CD8-positive, alpha-beta T cell (primary cell): ENCODE measurements at regions of chr14 and their contacts with region 1.

Region 1: DNA sequence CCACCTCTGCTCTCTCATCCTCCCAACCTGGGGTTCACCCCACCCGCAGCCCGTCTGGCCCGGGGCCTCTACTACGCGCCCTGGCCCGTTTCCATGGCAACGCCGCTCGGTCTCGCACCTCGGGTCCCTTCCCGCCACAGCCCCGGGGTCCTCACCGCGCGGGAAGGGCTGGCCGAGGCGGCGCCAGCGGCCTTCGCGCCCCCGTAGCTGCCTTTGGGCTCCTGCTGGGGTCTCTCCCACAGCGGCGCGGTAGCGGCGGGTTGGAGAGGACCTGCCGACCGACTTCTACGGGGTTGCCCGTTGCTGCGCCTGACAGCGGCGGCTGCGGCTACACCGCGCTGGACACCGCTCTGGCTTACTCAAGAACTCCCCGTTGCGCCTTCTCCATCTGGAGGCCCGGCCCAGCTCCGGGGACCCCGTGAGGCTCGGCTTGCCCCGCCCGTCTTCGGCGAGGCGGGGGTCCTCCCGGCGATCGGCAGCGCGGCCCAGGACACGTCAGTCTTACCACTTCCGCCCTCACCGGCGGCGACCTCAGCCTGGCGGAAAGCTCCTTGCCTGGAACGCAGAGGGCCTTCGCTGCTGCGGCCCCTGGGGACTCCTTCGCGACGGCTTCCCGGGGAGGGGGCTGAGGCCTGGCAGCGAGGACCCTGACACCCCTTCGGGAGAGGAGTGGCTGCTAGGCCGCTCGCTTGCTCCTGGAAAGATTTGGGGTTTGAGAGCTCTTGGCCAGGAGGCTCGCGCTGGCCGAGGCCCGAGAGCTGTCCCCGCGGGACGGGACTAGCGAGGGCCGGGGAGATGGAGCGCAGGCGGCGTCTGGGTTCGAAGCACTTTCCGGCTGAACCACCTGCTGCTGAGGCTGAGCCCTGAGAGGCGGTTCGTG is at the start of gene TM9SF1:
- DNase-seq: peak; percentile 81 to 96 (median 91)
- ATAC-seq: peak; percentile 83
- H3K4me3 ChIP-seq: peak within 1 kb of the TSS; percentile 87 to 94
- H3K4me3 Mint-ChIP-seq: peak within 1 kb of the TSS; percentile 94
- H3K27ac ChIP-seq: peak within 1 kb of the TSS; percentile 99 to 100
- H3K27ac Mint-ChIP-seq: peak within 1 kb of the TSS; percentile 98
- H3K4me1 ChIP-seq: peaks cover 31% of the 10 kb centered on the region
- H3K4me1 Mint-ChIP-seq: peaks cover 50% of the 10 kb centered on the region
- H3K27me3 ChIP-seq: no peaks in the 10 kb centered on the region
- H3K27me3 Mint-ChIP-seq: no peaks in the 10 kb centered on the region
- CTCF ChIP-seq: no peak
- total RNA-seq, gene TM9SF1: 17.5 to 20.4 TPM

Region 2: DNA sequence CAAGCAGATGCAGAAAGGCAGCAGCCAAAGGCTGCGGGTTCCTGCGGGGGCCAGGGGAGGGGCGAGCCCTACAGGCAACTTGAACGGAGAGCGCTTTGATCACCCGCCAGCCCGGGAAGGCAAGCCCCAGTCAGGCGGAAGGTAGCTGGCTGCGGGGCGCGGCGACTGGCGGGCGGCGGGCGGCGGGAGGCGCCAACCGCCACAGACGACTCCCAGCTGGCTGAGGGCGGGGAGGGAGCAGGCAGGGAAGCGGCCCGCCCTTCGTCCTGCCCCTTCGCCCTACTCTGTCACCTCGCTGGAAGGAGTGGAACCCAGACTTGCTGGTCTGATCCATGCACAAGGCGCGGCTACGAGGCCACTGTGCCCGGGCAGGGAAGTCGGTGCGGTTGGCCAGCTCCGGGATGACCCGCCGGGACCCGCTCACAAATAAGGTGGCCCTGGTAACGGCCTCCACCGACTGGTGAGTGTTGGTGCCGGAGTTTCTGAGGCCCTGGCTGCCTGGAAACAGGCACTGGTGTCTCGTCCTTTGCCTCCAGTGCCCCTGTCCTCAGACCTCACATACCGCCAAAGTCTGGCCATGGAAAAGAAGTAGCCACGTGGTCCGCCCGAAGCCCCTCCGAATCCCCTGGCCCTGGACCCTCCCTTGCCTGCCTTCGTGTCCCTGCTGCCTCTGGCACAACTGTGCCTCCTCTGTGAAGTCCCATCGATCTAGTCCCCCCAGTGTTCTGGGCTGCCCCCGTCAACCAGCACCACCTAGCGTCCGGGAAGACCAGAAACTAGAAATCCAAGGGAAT is 159.1 kb before region 1 on chr14:
- CTCF ChIA-PET with region 1: no interaction called
- POLR2A ChIA-PET with region 1: no interaction called
- intact Hi-C with region 1: no loop called
- DNase-seq: peak; percentile 29 to 79 (median 69)
- ATAC-seq: peak; percentile 79
- H3K4me3 ChIP-seq: peak overlapping the region; percentile 69 to 87
- H3K4me3 Mint-ChIP-seq: peak overlapping the region; percentile 89
- H3K27ac ChIP-seq: peak overlapping the region; percentile 40 to 66
- H3K27ac Mint-ChIP-seq: peak overlapping the region; percentile 83
- H3K4me1 ChIP-seq: no peaks in the 10 kb centered on the region
- H3K4me1 Mint-ChIP-seq: peaks cover 9% of the 10 kb centered on the region
- H3K27me3 ChIP-seq: no peaks in the 10 kb centered on the region
- H3K27me3 Mint-ChIP-seq: no peaks in the 10 kb centered on the region
- CTCF ChIP-seq: peak; percentile 64

Region 3: DNA sequence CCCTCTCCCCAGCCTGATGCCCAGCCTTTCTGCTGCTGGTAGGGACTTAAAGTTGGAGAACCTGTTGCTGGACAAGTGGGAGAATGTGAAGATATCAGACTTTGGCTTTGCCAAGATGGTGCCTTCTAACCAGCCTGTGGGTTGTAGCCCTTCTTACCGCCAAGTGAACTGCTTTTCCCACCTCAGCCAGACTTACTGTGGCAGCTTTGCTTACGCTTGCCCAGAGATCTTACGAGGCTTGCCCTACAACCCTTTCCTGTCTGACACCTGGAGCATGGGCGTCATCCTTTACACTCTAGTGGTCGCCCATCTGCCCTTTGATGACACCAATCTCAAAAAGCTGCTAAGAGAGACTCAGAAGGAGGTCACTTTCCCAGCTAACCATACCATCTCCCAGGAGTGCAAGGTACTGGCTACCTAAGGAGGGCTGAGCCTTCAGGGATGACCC is 11.7 kb after region 1 on chr14:
- CTCF ChIA-PET with region 1: interaction called, 6 read pairs
- POLR2A ChIA-PET with region 1: interaction called, 50 read pairs
- intact Hi-C with region 1: loop called in 1 of 2 experiments (anchors 1 kb)
- DNase-seq: peak in 3 of 9 experiments; percentile 53 to 67 (median 58)
- ATAC-seq: peak; percentile 69
- H3K4me3 ChIP-seq: no peak overlapping the region
- H3K4me3 Mint-ChIP-seq: peak overlapping the region; percentile 6
- H3K27ac ChIP-seq: peak overlapping the region in 1 of 2 experiments; percentile 50
- H3K27ac Mint-ChIP-seq: peak overlapping the region; percentile 88
- H3K4me1 ChIP-seq: peaks cover 9% of the 10 kb centered on the region
- H3K4me1 Mint-ChIP-seq: peaks cover 44% of the 10 kb centered on the region
- H3K27me3 ChIP-seq: no peaks in the 10 kb centered on the region
- H3K27me3 Mint-ChIP-seq: no peaks in the 10 kb centered on the region
- CTCF ChIP-seq: no peak

Region 4: DNA sequence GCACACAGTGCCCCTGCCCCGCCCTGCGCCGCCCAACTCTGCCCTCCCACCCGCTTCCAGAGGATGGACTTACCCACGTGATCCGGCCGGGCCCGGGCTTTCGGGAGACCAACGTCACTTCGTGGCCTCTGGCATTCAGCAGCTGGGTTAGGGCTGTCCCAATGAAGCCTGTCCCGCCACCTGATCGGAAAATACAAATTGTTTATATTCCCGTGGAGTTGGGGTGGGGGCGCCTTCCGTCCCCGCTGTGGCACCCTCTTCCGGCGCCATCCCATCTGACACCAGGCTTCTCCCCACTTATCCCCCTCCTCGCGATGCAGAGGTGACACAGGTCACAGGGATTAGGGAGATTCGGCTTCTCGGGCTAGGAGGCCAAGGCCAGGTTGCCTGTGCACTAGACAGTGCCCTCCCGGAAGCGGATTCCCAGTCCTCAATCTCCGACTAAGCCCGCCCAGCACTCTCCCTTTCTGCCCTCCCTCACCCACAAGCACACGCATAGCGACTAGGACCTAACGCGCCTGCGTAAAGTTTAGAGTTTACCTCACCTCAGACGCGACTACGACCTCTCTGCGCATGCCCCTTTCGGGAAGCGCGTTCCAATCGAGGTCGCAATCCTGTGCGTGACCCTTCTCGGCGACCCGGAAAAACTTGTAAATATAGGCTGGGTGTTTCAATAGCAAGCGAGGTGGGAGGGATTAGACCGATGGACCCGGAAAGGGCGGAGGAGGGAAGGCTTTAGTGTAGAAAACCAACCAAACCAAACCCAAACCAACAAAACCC is 247.0 kb after region 1 on chr14 and contains the start of gene SDR39U1:
- CTCF ChIA-PET with region 1: no interaction called
- POLR2A ChIA-PET with region 1: no interaction called
- intact Hi-C with region 1: loop called in 1 of 2 experiments (anchors 1 kb)
- DNase-seq: peak; percentile 93 to 100 (median 95)
- ATAC-seq: peak; percentile 89
- H3K4me3 ChIP-seq: peak within 1 kb of the TSS; percentile 77 to 89
- H3K4me3 Mint-ChIP-seq: peak within 1 kb of the TSS; percentile 95
- H3K27ac ChIP-seq: peak within 1 kb of the TSS; percentile 96
- H3K27ac Mint-ChIP-seq: peak within 1 kb of the TSS; percentile 97
- H3K4me1 ChIP-seq: peaks cover 35% of the 10 kb centered on the region
- H3K4me1 Mint-ChIP-seq: peaks cover 45% of the 10 kb centered on the region
- H3K27me3 ChIP-seq: no peaks in the 10 kb centered on the region
- H3K27me3 Mint-ChIP-seq: no peaks in the 10 kb centered on the region
- CTCF ChIP-seq: no peak
- total RNA-seq, gene SDR39U1: 75.0 to 84.4 TPM